Endothelial cell of umbilical vein (primary cell): ENCODE measurements at regions of chr3 and their contacts with region 1.

Region 1: GRCh38 chr3:67384760-67385397 is 269.5 kb downstream of the SUCLG2 start:
- DNase-seq: peak; percentile 45
- H3K4me3 ChIP-seq: no peak overlapping the region
- H3K27ac ChIP-seq: no peak overlapping the region
- H3K4me1 ChIP-seq: no peaks in the 10 kb centered on the region
- H3K27me3 ChIP-seq: no peaks in the 10 kb centered on the region
- CTCF ChIP-seq: peak; percentile 71 to 75
- POLR2A ChIP-seq: no peak

Region 2: GRCh38 chr3:67605377-67605776 is 220.5 kb after region 1 on chr3:
- CTCF ChIA-PET with region 1: interaction called, 16 read pairs
- POLR2A ChIA-PET with region 1: no interaction called
- dilution Hi-C with region 1: no loop called
- intact Hi-C with region 1: loop called (anchors 1 kb)
- DNase-seq: peak; percentile 20
- H3K4me3 ChIP-seq: no peak overlapping the region
- H3K27ac ChIP-seq: no peak overlapping the region
- H3K4me1 ChIP-seq: peaks cover 9% of the 10 kb centered on the region
- H3K27me3 ChIP-seq: no peaks in the 10 kb centered on the region
- CTCF ChIP-seq: no peak
- POLR2A ChIP-seq: no peak

Region 3: GRCh38 chr3:67719333-67719732 is 334.5 kb after region 1 on chr3:
- CTCF ChIA-PET with region 1: interaction called, 3 read pairs
- POLR2A ChIA-PET with region 1: no interaction called
- dilution Hi-C with region 1: no loop called
- intact Hi-C with region 1: loop called (anchors 10 kb)
- DNase-seq: peak; percentile 55
- H3K4me3 ChIP-seq: no peak overlapping the region
- H3K27ac ChIP-seq: peak overlapping the region; percentile 73
- H3K4me1 ChIP-seq: peaks cover 13% of the 10 kb centered on the region
- H3K27me3 ChIP-seq: no peaks in the 10 kb centered on the region
- CTCF ChIP-seq: no peak
- POLR2A ChIP-seq: no peak

Region 4: DNA sequence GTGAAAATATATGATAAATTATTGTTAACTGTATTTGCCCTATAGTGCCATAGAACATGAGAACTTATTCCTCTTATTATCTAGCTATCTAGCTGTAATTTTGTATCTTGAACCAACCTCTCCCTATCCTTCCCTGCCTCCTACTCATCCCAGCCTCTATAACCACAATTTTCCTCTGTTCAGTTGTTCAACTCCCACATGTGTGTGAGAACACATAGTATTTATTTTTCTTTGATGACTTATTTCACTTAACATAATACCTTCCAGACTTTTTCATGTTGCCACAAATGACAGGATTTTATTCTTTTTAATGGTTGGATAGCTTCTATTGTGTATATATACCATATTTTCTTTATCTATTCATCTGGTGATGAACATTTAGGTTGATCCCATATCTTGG is 355.0 kb after region 1 on chr3:
- CTCF ChIA-PET with region 1: no interaction called
- POLR2A ChIA-PET with region 1: no interaction called
- dilution Hi-C with region 1: no loop called
- intact Hi-C with region 1: no loop called
- DNase-seq: no peak
- H3K4me3 ChIP-seq: no peak overlapping the region
- H3K27ac ChIP-seq: no peak overlapping the region
- H3K4me1 ChIP-seq: no peaks in the 10 kb centered on the region
- H3K27me3 ChIP-seq: no peaks in the 10 kb centered on the region
- CTCF ChIP-seq: no peak
- POLR2A ChIP-seq: no peak

Region 5: DNA sequence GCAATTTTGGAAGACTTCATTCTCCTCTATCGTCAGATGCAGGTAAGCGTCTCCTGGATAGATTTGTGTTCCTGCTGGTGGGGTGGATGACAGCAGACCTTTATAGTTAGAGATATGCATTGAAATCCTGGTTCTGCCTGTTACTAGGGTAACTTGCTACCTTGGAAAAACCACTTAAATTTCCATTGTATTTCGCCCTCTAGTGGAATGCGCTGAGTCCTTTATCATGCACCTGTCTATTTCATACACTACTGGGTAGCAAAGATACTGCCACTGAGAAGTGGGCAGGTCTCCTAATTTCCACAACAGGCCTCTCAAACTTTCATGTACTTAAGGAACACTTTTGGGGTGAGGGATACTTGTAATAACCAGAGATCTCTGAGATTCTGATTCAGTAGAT is 479.0 kb after region 1 on chr3:
- CTCF ChIA-PET with region 1: interaction called, 5 read pairs
- POLR2A ChIA-PET with region 1: no interaction called
- dilution Hi-C with region 1: no loop called
- intact Hi-C with region 1: loop called (anchors 2 kb)
- DNase-seq: peak; percentile 9
- H3K4me3 ChIP-seq: no peak overlapping the region
- H3K27ac ChIP-seq: no peak overlapping the region
- H3K4me1 ChIP-seq: no peaks in the 10 kb centered on the region
- H3K27me3 ChIP-seq: no peaks in the 10 kb centered on the region
- CTCF ChIP-seq: peak; percentile 11 to 25
- POLR2A ChIP-seq: no peak

Region 6: DNA sequence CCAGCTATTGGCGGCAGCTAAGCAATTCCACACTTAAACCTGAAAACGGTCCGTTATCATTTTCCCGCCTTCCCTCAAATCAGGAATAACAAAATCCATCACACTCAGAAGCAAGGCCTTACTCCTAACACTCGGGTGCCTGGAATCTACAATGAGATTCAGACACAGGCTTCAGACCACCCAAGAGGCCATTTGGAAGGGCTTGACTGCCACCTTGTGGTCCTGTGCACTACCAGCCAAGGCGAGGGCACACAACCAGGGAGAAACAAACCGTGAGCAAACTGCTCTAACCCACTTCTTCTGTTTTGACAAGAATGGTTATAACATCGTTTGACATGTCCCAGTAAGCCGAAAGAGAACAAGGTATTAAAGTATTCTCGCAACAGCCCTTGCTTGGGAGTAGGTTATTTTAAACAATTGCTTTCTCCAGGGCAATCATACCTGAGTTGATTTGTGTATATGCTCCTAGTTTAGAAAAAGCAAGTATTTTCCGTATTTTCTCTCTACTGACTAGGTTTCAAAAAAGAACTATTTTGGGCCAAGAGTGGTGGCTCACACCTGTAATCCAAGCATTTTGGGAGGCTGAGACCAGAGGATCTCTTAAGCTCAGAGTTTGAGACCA is 1587.6 kb after region 1 on chr3:
- CTCF ChIA-PET with region 1: interaction called, 3 read pairs
- POLR2A ChIA-PET with region 1: no interaction called
- dilution Hi-C with region 1: no loop called
- intact Hi-C with region 1: loop called (anchors 5 kb)
- DNase-seq: peak; percentile 65
- H3K4me3 ChIP-seq: no peak overlapping the region
- H3K27ac ChIP-seq: no peak overlapping the region
- H3K4me1 ChIP-seq: peaks cover 12% of the 10 kb centered on the region
- H3K27me3 ChIP-seq: peaks cover 10 to 21% of the 10 kb centered on the region in 2 experiments
- CTCF ChIP-seq: peak; percentile 89 to 90
- POLR2A ChIP-seq: no peak